CD4-positive, alpha-beta T cell (primary cell): ENCODE measurements at regions of chr7 and their contacts with region 1.

Region 1: DNA sequence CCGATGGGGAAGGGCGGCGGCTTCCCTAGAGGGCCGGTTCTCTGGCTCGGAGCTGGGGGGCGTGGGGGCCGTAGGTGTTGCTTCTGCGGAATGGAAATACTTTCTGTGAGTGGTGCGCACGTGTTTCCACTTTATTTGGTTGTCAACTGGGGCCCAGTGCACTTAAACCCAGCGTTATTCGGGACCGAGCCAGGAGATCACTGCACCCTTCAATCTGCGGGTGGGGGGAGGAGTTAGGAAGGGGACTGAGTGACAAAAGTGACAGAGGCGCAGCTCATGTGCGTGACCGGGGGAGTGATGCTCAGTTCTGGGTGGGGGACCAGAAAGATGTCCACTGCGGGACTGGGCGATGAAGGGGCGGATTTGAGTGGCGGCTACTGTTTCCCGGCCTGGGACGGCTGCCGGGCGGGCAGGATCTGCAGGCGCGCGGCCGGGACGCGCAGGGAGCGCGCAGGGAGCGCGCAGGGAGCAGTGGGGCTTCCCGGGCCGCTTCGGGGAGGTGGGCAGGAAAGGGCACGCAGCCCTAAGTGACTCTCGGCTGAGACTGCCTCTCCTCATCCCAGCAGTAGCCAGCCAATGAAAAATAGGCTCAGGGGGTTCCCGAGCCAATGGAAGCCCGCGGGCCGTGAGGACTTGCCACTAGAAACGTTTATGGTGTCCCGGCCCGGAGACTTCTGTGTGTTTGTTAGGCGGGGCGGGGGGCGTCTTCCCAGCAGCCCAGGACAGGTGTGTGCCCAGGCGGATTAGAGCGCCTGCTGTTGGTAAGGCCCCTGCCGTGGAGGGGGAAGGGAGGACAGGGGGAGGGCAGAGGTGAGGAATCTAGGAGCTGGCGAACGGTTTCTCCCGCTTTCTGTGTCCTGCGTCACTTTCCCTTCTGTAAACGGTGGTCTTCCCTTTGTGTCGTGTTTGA is 54.3 kb upstream of the KDM7A start:
- DNase-seq: peak; percentile 23 to 80 (median 54)
- ATAC-seq: peak; percentile 17
- H3K4me3 ChIP-seq: peak overlapping the region; percentile 70
- H3K4me3 Mint-ChIP-seq: peak overlapping the region; percentile 88
- H3K27ac ChIP-seq: peak overlapping the region; percentile 84 to 97
- H3K27ac Mint-ChIP-seq: peak overlapping the region; percentile 99
- H3K4me1 ChIP-seq: peaks cover 44% of the 10 kb centered on the region
- H3K4me1 Mint-ChIP-seq: peaks cover 46% of the 10 kb centered on the region
- H3K27me3 ChIP-seq: no peaks in the 10 kb centered on the region
- H3K27me3 Mint-ChIP-seq: no peaks in the 10 kb centered on the region
- CTCF ChIP-seq: no peak

Region 2: GRCh38 chr7:140062528-140063299 is 168.4 kb before region 1 on chr7 and contains the start of gene PARP12:
- CTCF ChIA-PET with region 1: no interaction called
- POLR2A ChIA-PET with region 1: interaction called, 5 read pairs
- intact Hi-C with region 1: loop called (anchors 5 kb)
- DNase-seq: peak; percentile 71 to 94 (median 86)
- ATAC-seq: peak; percentile 67
- H3K4me3 ChIP-seq: peak within 1 kb of the TSS; percentile 71
- H3K4me3 Mint-ChIP-seq: peak within 1 kb of the TSS; percentile 85
- H3K27ac ChIP-seq: peak within 1 kb of the TSS; percentile 67 to 82
- H3K27ac Mint-ChIP-seq: peak within 1 kb of the TSS; percentile 83
- H3K4me1 ChIP-seq: peaks cover 49% of the 10 kb centered on the region
- H3K4me1 Mint-ChIP-seq: peaks cover 55% of the 10 kb centered on the region
- H3K27me3 ChIP-seq: no peaks in the 10 kb centered on the region
- H3K27me3 Mint-ChIP-seq: no peaks in the 10 kb centered on the region
- CTCF ChIP-seq: no peak
- total RNA-seq, gene PARP12: 76.7 to 78.5 TPM

Region 3: DNA sequence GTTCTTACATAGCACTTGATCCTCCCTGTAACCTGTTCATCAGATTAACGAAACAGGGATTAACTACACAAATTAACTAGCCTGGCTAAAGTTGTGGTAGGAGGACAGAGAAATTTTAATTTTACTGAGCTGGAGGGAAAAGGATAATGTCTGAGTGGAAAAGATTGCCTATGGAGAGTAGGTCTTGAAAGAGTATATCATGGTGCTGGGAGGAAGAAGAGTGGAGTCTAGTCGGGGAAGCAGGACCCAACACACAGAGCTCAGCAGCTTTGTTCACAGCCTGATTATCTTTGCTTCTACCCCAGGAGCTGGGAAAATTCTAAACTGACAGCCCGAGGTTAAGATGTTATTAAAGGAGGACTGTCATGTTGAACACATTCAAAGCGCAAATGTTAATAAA is 48.2 kb before region 1 on chr7:
- CTCF ChIA-PET with region 1: interaction called, 5 read pairs
- POLR2A ChIA-PET with region 1: interaction called, 394 read pairs
- intact Hi-C with region 1: loop called in 1 of 2 experiments (anchors 1 kb)
- DNase-seq: no peak
- ATAC-seq: no peak
- H3K4me3 ChIP-seq: no peak overlapping the region
- H3K4me3 Mint-ChIP-seq: no peak overlapping the region
- H3K27ac ChIP-seq: no peak overlapping the region
- H3K27ac Mint-ChIP-seq: no peak overlapping the region
- H3K4me1 ChIP-seq: peaks cover 5% of the 10 kb centered on the region
- H3K4me1 Mint-ChIP-seq: peaks cover 2% of the 10 kb centered on the region
- H3K27me3 ChIP-seq: no peaks in the 10 kb centered on the region
- H3K27me3 Mint-ChIP-seq: peaks cover 7% of the 10 kb centered on the region
- CTCF ChIP-seq: no peak

Region 4: DNA sequence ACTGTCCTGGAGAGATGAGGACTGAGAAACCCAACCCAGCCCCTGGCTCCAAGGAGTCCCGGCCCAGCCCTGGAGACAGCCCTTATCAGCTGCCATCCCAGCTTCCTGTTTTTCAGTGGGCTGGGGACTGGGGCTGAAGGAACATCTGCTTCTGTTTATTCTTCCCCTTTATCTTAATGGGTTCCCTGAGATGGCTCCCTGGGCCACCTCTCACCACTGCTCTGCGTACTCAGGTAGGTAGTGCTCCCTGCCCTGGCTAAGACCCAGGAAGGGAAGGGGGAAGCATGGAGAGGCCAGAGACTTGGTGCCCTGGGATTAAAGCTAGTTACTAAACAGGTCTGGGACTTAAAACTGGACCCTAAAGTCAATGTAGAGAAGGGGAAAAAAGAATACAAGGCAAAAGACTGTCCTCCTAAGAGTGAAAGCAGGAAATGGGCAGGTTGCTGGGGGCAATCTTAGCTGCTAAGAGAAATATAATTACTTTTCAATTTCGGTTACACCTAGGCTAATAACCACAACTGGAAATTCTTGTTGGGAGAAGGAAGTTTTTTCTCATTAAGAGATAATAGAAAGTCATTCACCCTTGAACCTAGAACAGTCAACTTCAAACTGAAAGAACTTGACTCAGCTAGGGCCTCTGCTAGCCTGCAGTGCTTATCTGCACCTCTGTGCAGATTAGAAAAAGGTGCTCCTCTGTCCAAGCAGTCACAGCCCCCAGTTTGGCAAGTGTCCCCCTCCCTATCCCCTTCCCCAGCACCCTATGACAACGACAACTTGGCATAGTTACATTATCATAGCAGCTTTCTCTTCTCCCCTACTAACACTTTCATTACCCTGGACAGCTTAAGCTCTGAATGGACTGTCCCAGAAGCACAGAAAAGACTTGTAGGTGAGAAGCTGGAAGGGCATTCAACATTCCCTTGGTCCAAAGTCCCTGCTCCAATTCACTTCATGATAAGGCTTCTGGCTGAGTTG is 11.2 kb after region 1 on chr7:
- CTCF ChIA-PET with region 1: no interaction called
- POLR2A ChIA-PET with region 1: interaction called, 15 read pairs
- intact Hi-C with region 1: no loop called
- DNase-seq: peak in 2 of 14 experiments; percentile 31 to 35
- ATAC-seq: no peak
- H3K4me3 ChIP-seq: no peak overlapping the region
- H3K4me3 Mint-ChIP-seq: no peak overlapping the region
- H3K27ac ChIP-seq: no peak overlapping the region
- H3K27ac Mint-ChIP-seq: no peak overlapping the region
- H3K4me1 ChIP-seq: peaks cover 10% of the 10 kb centered on the region
- H3K4me1 Mint-ChIP-seq: peaks cover 8% of the 10 kb centered on the region
- H3K27me3 ChIP-seq: no peaks in the 10 kb centered on the region
- H3K27me3 Mint-ChIP-seq: no peaks in the 10 kb centered on the region
- CTCF ChIP-seq: no peak

Region 5: GRCh38 chr7:140260352-140261104 is 29.4 kb after region 1 on chr7:
- CTCF ChIA-PET with region 1: no interaction called
- POLR2A ChIA-PET with region 1: interaction called, 57 read pairs
- intact Hi-C with region 1: loop called in 1 of 2 experiments (anchors 2 kb)
- DNase-seq: no peak
- ATAC-seq: no peak
- H3K4me3 ChIP-seq: no peak overlapping the region
- H3K4me3 Mint-ChIP-seq: no peak overlapping the region
- H3K27ac ChIP-seq: no peak overlapping the region
- H3K27ac Mint-ChIP-seq: peak overlapping the region; percentile 40
- H3K4me1 ChIP-seq: peaks cover 36% of the 10 kb centered on the region
- H3K4me1 Mint-ChIP-seq: peaks cover 45% of the 10 kb centered on the region
- H3K27me3 ChIP-seq: no peaks in the 10 kb centered on the region
- H3K27me3 Mint-ChIP-seq: no peaks in the 10 kb centered on the region
- CTCF ChIP-seq: no peak

Region 6: GRCh38 chr7:140326116-140326928 is 95.2 kb after region 1 on chr7:
- CTCF ChIA-PET with region 1: interaction called, 3 read pairs
- POLR2A ChIA-PET with region 1: no interaction called
- intact Hi-C with region 1: loop called in 1 of 2 experiments (anchors 1 kb)
- DNase-seq: peak; percentile 34 to 74 (median 49)
- ATAC-seq: peak; percentile 86
- H3K4me3 ChIP-seq: no peak overlapping the region
- H3K4me3 Mint-ChIP-seq: no peak overlapping the region
- H3K27ac ChIP-seq: no peak overlapping the region
- H3K27ac Mint-ChIP-seq: no peak overlapping the region
- H3K4me1 ChIP-seq: peaks cover 10% of the 10 kb centered on the region
- H3K4me1 Mint-ChIP-seq: no peaks in the 10 kb centered on the region
- H3K27me3 ChIP-seq: no peaks in the 10 kb centered on the region
- H3K27me3 Mint-ChIP-seq: no peaks in the 10 kb centered on the region
- CTCF ChIP-seq: peak; percentile 56